Activated T-helper 1 cell treated with anti-CD3 and anti-CD28 coated beads, Interleukin-12 subunit alpha, Interleukin-12 subunit beta, Interleukin-2, Interleukin-4 antibody, amounts not matched to agents 30 ng/mL and 10 ng/mL and 1 ng/mL, durations not matched to agents 14 hours and 24 hours and 36 hours (primary cell): ENCODE measurements at regions of chr10 and their contacts with region 1.

Region 1: DNA sequence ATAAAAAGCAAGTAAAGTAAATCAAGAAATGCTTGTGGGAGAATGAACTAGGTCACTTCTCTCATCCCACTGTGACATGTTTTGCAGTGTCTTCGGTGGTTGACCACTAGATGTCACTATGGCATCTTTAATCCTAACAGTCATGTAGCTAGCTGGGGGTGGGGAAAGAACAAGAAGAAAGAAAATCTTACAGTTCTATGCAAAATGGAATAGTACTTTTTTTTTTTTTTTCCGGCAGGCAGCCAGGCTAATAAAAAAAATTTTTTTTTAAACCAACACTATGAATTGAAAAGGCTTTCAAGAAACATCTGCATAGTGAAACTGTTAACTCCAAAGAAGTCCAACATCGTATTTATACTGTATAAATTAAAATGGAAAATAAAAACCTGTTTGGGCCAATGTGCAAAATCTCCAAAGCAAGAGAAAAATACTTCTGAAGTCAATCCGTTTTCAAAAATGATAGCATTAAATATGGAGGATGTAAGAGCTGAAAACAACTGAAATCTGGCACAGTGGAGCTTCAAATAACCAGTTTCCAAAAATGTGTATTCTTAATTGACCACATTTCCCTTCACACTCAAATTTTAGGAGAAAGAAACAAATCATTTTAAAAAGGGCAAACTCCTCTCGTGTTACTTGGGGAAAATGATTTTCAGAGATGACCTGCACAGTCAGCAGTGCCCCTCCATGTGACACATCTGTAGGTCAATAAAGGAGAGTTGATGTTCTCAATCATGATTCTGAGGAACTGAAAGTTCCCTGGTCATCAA is 38.5 kb downstream of the CDK1 start:
- DNase-seq: no peak
- H3K4me3 Mint-ChIP-seq: no peak overlapping the region
- H3K27ac Mint-ChIP-seq: no peak overlapping the region
- H3K4me1 Mint-ChIP-seq: peaks cover 9% of the 10 kb centered on the region
- H3K27me3 Mint-ChIP-seq: peaks cover 17% of the 10 kb centered on the region

Region 2: DNA sequence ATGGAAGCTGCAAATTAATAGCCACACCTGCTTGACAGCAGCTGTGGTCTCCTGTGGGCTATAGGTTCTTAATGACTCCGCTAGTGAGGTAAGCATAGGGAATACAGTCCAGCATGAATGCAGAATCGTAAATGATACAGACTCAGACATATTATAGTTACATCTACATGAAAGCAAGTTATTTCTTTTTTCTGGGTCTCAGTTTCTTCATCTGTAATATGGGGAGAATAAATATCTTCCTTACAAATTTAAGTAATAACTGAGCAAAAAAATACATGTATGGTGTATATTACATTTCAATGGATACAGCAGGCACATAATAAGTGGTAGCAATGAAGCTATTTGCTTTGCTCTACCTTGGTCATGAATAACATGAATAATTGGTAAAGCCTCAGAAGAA is 373.1 kb after region 1 on chr10:
- intact Hi-C with region 1: loop called (anchors 2 kb)
- DNase-seq: no peak
- H3K4me3 Mint-ChIP-seq: no peak overlapping the region
- H3K27ac Mint-ChIP-seq: no peak overlapping the region
- H3K4me1 Mint-ChIP-seq: no peaks in the 10 kb centered on the region
- H3K27me3 Mint-ChIP-seq: peaks cover 2% of the 10 kb centered on the region

Region 3: GRCh38 chr10:61284222-61284890 is 467.5 kb after region 1 on chr10:
- intact Hi-C with region 1: loop called (anchors 1 kb)
- DNase-seq: no peak
- H3K4me3 Mint-ChIP-seq: no peak overlapping the region
- H3K27ac Mint-ChIP-seq: no peak overlapping the region
- H3K4me1 Mint-ChIP-seq: peaks cover 25% of the 10 kb centered on the region
- H3K27me3 Mint-ChIP-seq: peaks cover 15% of the 10 kb centered on the region

Region 4: DNA sequence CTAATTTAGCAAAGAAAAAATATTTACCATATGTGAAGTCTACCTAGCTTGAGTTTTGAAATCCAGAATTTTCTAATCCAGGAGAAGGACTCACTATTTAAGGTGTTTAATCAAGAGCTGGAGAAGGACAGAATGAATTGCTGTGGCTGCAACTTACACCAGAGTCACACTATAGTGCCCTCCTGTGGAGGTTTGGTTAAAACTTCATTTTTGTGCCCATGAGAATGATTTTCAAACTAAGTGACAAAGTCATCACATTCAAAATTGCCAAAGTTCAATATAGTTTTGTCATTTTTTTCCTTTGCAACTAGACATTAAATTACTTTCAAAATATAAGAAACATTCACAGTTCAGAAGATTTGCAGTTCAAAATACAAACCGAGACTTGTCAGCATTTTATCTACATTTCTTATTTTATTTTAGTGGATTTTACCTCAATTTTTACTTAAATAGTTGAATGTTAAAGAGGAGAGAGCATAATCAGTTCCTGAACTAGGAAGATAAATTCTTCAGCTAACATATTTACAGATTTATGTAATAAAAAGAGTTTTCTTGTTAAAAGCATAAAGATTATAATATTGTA is 916.6 kb after region 1 on chr10:
- intact Hi-C with region 1: loop called (anchors 1 kb)
- DNase-seq: no peak
- H3K4me3 Mint-ChIP-seq: no peak overlapping the region
- H3K27ac Mint-ChIP-seq: no peak overlapping the region
- H3K4me1 Mint-ChIP-seq: no peaks in the 10 kb centered on the region
- H3K27me3 Mint-ChIP-seq: peaks cover 39% of the 10 kb centered on the region

Region 5: GRCh38 chr10:61835069-61835945 is 1018.5 kb after region 1 on chr10:
- intact Hi-C with region 1: loop called (anchors 1 kb)
- DNase-seq: no peak
- H3K4me3 Mint-ChIP-seq: no peak overlapping the region
- H3K27ac Mint-ChIP-seq: no peak overlapping the region
- H3K4me1 Mint-ChIP-seq: peaks cover 13% of the 10 kb centered on the region
- H3K27me3 Mint-ChIP-seq: no peaks in the 10 kb centered on the region